ENCODE measurements at regions of chr10 and their contacts with region 1.

Region 1: GRCh38 chr10:75283671-75284470 is 48.1 kb upstream of the COMTD1 start:
- H3K4me3 ChIP-seq: no peak overlapping the region
- H3K27ac ChIP-seq: peak overlapping the region; percentile 46
- H3K4me1 ChIP-seq: no peaks in the 10 kb centered on the region; the same call in none of the 2 replicates
- CTCF ChIP-seq: no peak

Region 2: DNA sequence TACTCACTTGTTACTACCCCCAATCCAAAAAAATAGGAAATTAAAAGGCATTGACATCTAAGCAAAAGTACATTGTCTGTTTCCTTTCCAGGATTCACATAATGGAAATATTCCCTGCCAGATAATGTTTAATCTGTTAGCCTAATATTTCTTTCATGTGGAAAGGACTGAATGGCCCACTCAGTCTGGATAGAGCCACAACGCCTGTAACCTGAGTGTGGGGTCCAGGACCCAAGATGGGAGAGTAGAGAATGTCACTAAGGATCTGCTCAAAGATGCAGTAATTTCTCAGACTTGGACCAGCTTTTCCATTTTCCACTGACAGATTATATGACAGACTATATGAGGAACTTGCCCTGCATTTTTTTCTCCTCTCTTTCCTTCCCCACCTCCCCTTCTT is 1264.8 kb after region 1 on chr10:
- CTCF ChIA-PET with region 1: interaction called, 11 read pairs
- POLR2A ChIA-PET with region 1: no interaction called
- H3K4me3 ChIP-seq: no peak overlapping the region
- H3K27ac ChIP-seq: no peak overlapping the region
- H3K4me1 ChIP-seq: peaks cover 2% of the 10 kb centered on the region; the same call in 1 of the 2 replicates
- CTCF ChIP-seq: no peak